CD8-positive, alpha-beta T cell (primary cell): ENCODE measurements at regions of chr1 and their contacts with region 1.

Region 1: DNA sequence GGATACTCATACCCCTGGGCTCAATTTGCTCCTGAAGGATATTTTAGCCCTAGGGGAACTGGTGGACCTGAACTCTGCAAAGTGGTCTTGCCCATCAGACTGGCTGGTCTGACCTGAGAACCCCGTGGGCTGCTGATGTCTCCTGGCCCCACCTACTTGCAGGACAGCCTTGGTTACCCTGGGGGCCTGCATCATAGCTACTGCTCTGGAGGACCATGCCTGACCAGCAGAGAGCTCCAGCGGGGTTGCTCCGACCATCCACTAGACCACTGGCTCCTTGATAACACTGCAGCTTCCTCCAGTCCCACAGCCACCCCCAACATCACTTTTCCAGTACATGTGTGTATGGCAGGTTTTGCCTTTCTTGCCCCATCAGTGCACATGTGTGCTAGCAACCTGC is 331.6 kb upstream of the BRINP3 start:
- DNase-seq: no peak
- ATAC-seq: no peak
- H3K4me3 ChIP-seq: no peak overlapping the region
- H3K4me3 Mint-ChIP-seq: no peak overlapping the region
- H3K27ac ChIP-seq: no peak overlapping the region
- H3K27ac Mint-ChIP-seq: no peak overlapping the region
- H3K4me1 ChIP-seq: no peaks in the 10 kb centered on the region
- H3K4me1 Mint-ChIP-seq: no peaks in the 10 kb centered on the region
- H3K27me3 ChIP-seq: no peaks in the 10 kb centered on the region
- H3K27me3 Mint-ChIP-seq: no peaks in the 10 kb centered on the region
- CTCF ChIP-seq: no peak

Region 2: GRCh38 chr1:190762325-190762724 is 47.0 kb before region 1 on chr1:
- CTCF ChIA-PET with region 1: no interaction called
- POLR2A ChIA-PET with region 1: no interaction called
- intact Hi-C with region 1: loop called in 1 of 2 experiments (anchors 2 kb)
- DNase-seq: no peak
- ATAC-seq: no peak
- H3K4me3 ChIP-seq: no peak overlapping the region
- H3K4me3 Mint-ChIP-seq: no peak overlapping the region
- H3K27ac ChIP-seq: no peak overlapping the region
- H3K27ac Mint-ChIP-seq: no peak overlapping the region
- H3K4me1 ChIP-seq: no peaks in the 10 kb centered on the region
- H3K4me1 Mint-ChIP-seq: no peaks in the 10 kb centered on the region
- H3K27me3 ChIP-seq: no peaks in the 10 kb centered on the region
- H3K27me3 Mint-ChIP-seq: no peaks in the 10 kb centered on the region
- CTCF ChIP-seq: no peak